Head of caudate nucleus (tissue), 42 donors: ENCODE measurements at regions of chr1 and their contacts with region 1.

Region 1: DNA sequence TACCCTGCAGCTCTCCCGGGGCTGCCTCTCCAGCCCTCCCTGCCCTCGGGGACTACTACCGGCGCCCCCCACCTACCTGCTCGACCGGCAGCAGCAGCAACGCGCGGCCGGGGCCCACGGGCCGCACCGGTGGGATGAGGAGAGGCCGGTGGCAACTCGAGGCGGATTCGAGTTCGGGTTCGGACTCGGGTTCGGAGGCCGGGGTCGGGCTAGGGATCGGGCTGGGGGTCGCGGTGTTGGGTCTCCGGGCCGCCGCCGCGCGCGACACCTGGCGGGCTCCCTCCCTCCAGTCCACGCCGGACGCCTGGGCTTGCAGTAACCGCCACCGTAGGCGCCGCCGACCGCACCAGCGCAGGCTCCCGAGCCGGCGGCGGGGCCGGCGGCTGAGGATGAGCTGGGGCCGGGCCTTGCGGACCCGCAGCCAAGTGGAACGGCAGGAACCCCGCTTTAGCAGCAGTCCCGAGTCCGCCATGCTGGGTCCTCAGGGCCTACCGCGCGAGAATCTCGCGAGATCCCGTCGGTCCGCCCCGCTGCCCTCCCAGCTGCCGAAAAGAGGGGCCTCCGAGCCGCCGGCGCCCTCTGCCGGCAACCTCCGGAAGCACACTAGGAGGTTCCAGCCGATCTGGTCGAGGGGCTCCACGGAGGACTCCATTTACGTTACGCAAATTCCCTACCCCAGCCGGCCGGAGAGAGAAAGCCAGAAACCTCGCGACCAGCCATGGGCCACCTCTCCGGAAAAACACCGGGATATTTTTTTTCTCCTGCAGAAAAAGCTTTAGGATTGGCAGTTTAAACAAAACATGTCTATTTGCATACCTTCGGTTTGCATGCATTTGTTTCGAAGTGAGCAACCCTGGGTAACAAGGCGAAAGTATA is at the start of gene NOL9:
- DNase-seq: peak; percentile 82 to 98 (median 96)

Region 2: DNA sequence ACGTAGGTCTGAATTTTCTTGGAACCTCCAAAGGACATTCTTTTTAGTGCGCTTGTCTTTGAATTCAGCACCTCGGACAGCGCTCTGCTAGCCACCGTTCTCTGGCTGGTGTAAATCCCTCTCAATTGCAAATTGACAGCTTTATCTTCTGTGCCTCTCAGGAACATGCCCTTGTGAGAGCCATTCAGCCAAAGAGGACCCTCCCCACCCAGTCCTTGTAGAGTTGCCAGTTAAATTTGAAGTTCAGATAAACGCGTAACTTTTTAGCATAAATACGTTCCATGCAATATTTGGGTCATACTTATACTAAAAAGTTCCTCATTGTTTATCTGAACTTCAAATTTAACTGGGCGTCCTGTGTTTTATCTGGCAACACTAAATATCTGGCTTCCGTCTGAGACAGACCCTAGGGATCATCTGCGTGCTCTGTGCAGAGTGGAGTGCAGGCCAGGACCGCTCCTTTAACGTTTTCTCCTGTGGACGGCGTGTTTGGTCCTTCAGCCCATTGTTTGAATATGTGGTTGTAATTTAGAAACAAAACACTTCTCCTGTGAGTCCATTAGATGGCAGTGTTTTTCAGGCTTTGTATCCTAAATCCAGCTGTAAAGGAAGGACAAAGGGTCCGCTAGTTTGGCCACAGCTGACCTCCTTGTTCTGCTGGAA is 501.6 kb before region 1 on chr1:
- intact Hi-C with region 1: no loop called
- DNase-seq: peak in 31 of 42 donors; percentile 32 to 85 (median 59)

Region 3: DNA sequence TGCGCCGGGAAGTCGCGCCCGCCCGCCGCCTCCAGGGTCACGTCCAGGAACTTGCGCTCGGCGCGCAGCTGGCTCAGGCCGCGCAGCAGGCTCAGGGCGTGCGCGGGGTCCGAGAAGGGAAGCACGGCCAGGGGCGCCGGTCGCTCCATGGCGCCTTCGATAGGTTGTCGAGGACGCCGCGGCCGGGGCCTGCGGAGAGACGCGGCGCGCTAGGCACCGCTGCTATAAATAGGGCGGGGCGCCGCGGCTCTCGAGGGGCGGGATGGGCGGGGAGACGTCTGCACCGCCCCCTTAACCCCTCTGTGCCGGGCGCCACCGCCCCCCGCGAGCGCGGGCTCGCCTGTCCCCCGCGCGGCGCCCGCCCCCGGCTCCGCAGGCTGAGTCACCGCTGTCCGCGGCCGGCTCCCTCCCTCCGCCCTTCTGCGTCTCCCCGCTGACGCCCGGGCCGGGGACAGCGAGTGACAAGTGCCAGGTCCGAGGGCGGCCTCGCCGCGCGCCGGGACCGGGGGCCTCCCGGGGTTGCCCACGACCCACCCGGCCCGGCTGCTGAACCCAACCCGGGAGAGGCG is 48.5 kb after region 1 on chr1 and contains the start of gene KLHL21:
- intact Hi-C with region 1: loop called (anchors 10 kb)
- DNase-seq: peak; percentile 40 to 97 (median 90)

Region 4: GRCh38 chr1:6638226-6638625 is 84.0 kb after region 1 on chr1:
- intact Hi-C with region 1: no loop called
- DNase-seq: peak in 37 of 42 donors; percentile 19 to 78 (median 54)

Region 5: GRCh38 chr1:6701437-6702153 is 147.3 kb after region 1 on chr1 and contains the start of gene DNAJC11:
- intact Hi-C with region 1: loop called (anchors 5 kb)
- DNase-seq: peak; percentile 77 to 97 (median 93)